HepG2 (cell line): ENCODE measurements at regions of chr18 and their contacts with region 1.

Region 1: DNA sequence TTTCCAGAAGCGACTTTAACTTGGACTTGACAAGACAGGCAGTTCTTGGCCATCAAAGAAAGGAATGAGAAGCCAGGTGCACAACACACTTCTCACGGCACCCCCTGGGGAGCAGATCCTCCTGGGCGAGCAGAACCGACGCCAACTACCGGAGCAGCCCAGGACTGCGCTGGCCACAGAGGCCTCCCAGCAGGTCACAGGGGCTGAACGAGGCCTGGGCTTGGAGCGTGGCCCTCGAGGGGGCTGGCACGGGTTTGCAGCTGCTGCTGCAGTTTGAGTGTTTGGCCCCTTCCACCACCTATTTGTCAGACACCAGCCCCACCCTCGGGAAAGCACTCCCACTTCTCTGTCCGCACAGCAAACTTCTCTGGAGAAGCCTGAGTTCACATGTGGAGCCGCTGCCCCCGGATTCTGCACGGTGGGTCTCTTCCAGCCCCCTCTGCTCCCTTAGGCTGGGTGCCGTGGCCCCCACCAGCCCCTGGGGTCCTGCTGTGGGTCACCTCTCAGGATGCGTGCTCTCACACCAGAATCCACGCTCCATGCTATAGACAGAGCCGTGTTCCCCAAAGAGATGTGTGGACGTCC is 306.7 kb upstream of the SALL3 start:
- DNase-seq: no peak
- ATAC-seq: peak; percentile 31; the same call in 1 of the 3 replicates
- H3K4me3 ChIP-seq: no peak overlapping the region
- H3K27ac ChIP-seq: no peak overlapping the region
- H3K4me1 ChIP-seq: no peaks in the 10 kb centered on the region
- H3K27me3 ChIP-seq: peaks cover 12 to 61% of the 10 kb centered on the region in 2 experiments; a peak in 4 of 5 replicates
- CTCF ChIP-seq: no peak
- EP300 ChIP-seq: no peak
- POLR2A ChIP-seq: no peak
- RAD21 ChIP-seq: no peak

Region 2: DNA sequence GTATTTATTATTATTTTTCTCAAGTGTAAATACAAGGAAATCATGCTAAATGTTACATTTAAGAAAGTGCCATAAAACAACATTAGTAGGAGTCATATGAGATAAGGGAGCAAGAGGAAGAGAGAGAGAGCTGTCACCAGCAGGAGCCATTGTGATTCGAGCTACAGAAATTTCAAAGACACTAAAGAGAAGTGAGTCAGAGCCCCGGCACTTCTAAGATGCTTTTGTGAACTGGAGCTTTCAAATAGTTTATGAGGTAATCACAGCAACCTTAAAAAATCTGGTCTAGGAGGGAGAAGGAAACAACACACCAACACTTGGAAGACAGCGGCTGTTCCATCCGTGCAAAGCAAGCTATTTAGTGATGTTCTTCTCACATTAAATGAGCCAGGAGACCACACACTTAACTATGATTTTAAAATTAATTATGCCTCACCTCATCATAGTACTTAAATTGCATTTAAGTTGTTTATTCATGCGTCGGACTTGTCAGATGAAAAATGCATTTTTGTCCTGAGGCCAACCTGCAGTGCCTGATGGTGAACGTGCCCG is 76.1 kb before region 1 on chr18:
- CTCF ChIA-PET with region 1: no interaction called
- POLR2A ChIA-PET with region 1: no interaction called
- in situ Hi-C with region 1: no loop called
- intact Hi-C with region 1: no loop called
- DNase-seq: no peak
- ATAC-seq: no peak
- H3K4me3 ChIP-seq: no peak overlapping the region
- H3K27ac ChIP-seq: no peak overlapping the region
- H3K4me1 ChIP-seq: no peaks in the 10 kb centered on the region
- H3K27me3 ChIP-seq: peaks cover 0 to 7% of the 10 kb centered on the region in 2 experiments; a peak in 1 of 5 replicates
- CTCF ChIP-seq: no peak
- EP300 ChIP-seq: no peak
- POLR2A ChIP-seq: no peak
- RAD21 ChIP-seq: no peak

Region 3: DNA sequence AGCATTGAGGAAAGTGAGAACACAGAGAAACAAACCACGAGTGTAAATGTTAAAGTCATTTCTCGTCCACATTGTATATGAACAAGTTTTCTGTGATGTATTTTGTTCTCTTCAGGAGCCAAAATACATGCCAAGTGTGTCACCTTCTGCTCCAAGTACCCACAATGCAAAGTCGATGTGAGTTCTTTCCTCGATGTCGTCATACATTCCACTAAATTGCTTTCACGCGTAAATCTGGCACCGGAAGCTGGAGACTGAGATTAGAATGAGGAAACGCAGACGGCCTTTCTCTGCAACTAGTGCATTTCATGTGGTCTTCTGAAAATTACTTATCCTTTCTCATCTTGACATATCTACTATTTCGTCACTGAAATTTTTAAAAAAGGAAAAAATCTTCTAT is 188.2 kb after region 1 on chr18:
- CTCF ChIA-PET with region 1: no interaction called
- POLR2A ChIA-PET with region 1: no interaction called
- in situ Hi-C with region 1: loop called (anchors 10 kb)
- intact Hi-C with region 1: no loop called
- DNase-seq: no peak
- ATAC-seq: no peak
- H3K4me3 ChIP-seq: no peak overlapping the region
- H3K27ac ChIP-seq: no peak overlapping the region
- H3K4me1 ChIP-seq: no peaks in the 10 kb centered on the region
- H3K27me3 ChIP-seq: peaks cover 3 to 50% of the 10 kb centered on the region in 2 experiments; a peak in 3 of 5 replicates
- CTCF ChIP-seq: no peak
- EP300 ChIP-seq: no peak
- POLR2A ChIP-seq: no peak
- RAD21 ChIP-seq: no peak